SK-N-SH (cell line): ENCODE measurements at regions of chr12 and their contacts with region 1.

Region 1: GRCh38 chr12:109739747-109740693 is 26.4 kb downstream of the FAM222A start:
- DNase-seq: peak; percentile 59
- H3K4me3 ChIP-seq: no peak overlapping the region
- H3K27ac ChIP-seq: peak overlapping the region in 1 of 2 experiments; percentile 66; a peak in 2 of 4 replicates
- H3K4me1 ChIP-seq: peaks cover 0 to 98% of the 10 kb centered on the region in 2 experiments; a peak in 2 of 4 replicates
- H3K27me3 ChIP-seq: no peaks in the 10 kb centered on the region
- CTCF ChIP-seq: peak; percentile 33; the same call in 1 of the 2 replicates
- EP300 ChIP-seq: peak in 1 of 2 experiments; percentile 52; a peak in 1 of 4 replicates
- RAD21 ChIP-seq: peak; percentile 41

Region 2: GRCh38 chr12:109752117-109753053 is 12.4 kb after region 1 on chr12:
- CTCF ChIA-PET with region 1: interaction called, 16 read pairs
- POLR2A ChIA-PET with region 1: interaction called, 3 read pairs
- DNase-seq: peak; percentile 82
- H3K4me3 ChIP-seq: no peak overlapping the region
- H3K27ac ChIP-seq: peak overlapping the region in 1 of 2 experiments; percentile 98; a peak in 2 of 4 replicates
- H3K4me1 ChIP-seq: peaks cover 0 to 35% of the 10 kb centered on the region in 2 experiments; a peak in 2 of 4 replicates
- H3K27me3 ChIP-seq: no peaks in the 10 kb centered on the region
- CTCF ChIP-seq: no peak
- EP300 ChIP-seq: peak; percentile 54 to 100; a peak in 3 of 4 replicates
- RAD21 ChIP-seq: peak; percentile 32